B cell (primary cell): ENCODE measurements at regions of chr11 and their contacts with region 1.

Region 1: GRCh38 chr11:124778281-124778680 is 16.2 kb upstream of the ESAM start:
- DNase-seq: no peak
- ATAC-seq: no peak
- H3K4me3 ChIP-seq: no peak overlapping the region
- H3K4me3 Mint-ChIP-seq: no peak overlapping the region
- H3K27ac ChIP-seq: no peak overlapping the region
- H3K27ac Mint-ChIP-seq: no peak overlapping the region
- H3K4me1 ChIP-seq: no peaks in the 10 kb centered on the region
- H3K4me1 Mint-ChIP-seq: peaks cover 15% of the 10 kb centered on the region
- H3K27me3 ChIP-seq: no peaks in the 10 kb centered on the region
- H3K27me3 Mint-ChIP-seq: no peaks in the 10 kb centered on the region
- CTCF ChIP-seq: no peak

Region 2: DNA sequence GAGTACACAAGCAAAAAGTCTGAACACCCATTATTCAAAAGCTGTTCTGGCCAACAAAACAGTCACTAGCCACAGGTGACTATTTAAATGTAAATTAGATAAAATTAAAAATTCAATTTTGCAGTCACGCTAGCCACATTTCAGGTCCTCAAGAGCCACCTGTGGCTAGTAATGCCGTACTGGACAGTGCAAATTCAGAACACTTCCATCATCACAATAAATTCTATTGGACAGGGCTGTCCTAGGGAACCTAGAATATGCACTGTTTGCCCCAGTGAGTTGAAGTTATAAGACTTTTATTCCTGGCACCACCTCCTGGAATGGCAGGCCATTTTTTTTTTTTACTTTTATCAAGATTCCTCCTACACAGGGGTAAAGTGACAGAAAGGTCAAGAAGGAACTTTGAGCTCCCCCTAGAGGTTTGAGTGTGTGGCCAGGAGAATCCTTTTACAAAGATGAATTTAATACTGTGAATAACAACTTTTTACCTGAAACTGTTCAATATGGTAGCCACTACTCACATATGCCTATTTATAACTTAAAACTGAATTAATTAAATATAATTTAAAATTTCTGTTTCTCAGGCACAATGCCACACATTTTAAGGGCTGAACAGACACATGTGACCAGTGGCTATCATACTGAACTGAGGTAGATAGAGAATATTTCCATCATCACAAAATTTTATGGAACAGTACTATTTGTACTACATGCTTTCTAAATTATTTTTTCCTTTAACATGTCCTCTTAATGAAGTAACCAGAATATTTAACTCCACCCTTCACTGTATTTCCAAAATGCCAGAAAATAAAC is 15.4 kb after region 1 on chr11:
- CTCF ChIA-PET with region 1: interaction called, 12 read pairs
- POLR2A ChIA-PET with region 1: no interaction called
- intact Hi-C with region 1: no loop called
- DNase-seq: peak; percentile 67
- ATAC-seq: no peak
- H3K4me3 ChIP-seq: no peak overlapping the region
- H3K4me3 Mint-ChIP-seq: no peak overlapping the region
- H3K27ac ChIP-seq: no peak overlapping the region
- H3K27ac Mint-ChIP-seq: no peak overlapping the region
- H3K4me1 ChIP-seq: peaks cover 3 to 8% of the 10 kb centered on the region in 2 donors
- H3K4me1 Mint-ChIP-seq: peaks cover 21% of the 10 kb centered on the region
- H3K27me3 ChIP-seq: no peaks in the 10 kb centered on the region
- H3K27me3 Mint-ChIP-seq: no peaks in the 10 kb centered on the region
- CTCF ChIP-seq: peak; percentile 78